Panc1 (cell line): ENCODE measurements at regions of chr11 and their contacts with region 1.

Region 1: DNA sequence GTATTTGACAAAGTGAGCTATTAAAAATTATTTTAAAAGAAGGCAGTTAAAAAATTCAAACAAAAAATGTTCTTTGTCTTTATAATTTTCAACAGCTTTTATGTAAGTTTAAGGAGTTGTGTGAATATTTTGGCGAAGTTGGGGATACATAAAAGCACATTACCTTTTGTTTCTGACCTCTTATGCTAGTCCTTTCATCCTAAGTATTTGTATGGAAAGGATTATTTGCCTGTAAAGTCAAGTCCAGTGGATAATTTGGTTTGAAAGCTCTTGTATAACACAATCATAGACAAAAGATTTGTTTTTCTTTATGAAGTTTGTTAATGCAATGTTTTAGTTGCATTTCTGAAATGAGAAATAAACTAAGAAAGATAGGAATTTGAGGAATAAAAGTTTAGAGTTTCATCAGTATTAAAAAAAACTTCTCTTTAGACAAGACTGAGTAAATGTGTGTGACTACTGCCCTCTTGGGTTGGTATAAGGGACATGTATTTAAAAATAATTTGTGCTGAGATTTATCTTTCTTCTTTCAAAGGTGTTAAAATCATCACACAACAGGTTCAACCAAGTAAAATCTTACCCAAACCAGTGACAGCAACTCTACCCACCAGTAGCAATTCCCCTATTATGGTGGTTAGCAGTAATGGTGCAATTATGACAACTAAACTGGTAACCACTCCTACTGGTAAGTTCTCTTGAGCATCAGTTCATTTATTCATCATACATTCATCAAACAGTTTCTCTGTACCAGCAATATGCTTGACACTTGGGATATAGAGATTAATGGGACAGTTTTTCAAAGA is 68.2 kb downstream of the EMSY start:
- DNase-seq: no peak
- ATAC-seq: no peak
- H3K4me3 ChIP-seq: no peak overlapping the region
- H3K27ac ChIP-seq: no peak overlapping the region
- H3K4me1 ChIP-seq: no peaks in the 10 kb centered on the region
- H3K27me3 ChIP-seq: no peaks in the 10 kb centered on the region
- CTCF ChIP-seq: peak; percentile 60; the same call in 1 of the 2 replicates

Region 2: DNA sequence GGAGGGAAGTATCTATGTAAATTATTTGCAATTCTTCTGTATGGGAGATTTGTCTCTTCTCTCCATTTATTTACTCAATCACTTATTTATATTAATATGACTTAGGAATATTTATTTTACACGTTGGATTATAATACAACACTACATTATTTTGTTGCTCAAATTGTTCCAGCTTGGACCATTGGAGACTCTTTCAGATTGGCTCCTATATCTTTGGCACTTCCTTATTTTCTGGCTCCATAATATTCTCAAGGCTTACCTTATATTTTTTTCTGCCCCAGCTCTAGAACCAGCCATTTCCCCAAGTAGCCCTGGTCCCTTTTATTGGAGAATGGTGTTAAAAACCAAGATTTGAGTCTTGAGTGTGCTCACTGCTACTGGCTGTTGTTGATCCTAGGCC is 55.6 kb after region 1 on chr11:
- CTCF ChIA-PET with region 1: no interaction called
- POLR2A ChIA-PET with region 1: no interaction called
- in situ Hi-C with region 1: no loop called
- intact Hi-C with region 1: loop called (anchors 1 kb)
- DNase-seq: no peak
- ATAC-seq: no peak
- H3K4me3 ChIP-seq: no peak overlapping the region
- H3K27ac ChIP-seq: no peak overlapping the region
- H3K4me1 ChIP-seq: no peaks in the 10 kb centered on the region
- H3K27me3 ChIP-seq: peaks cover 2% of the 10 kb centered on the region; the same call in 1 of the 2 replicates
- CTCF ChIP-seq: no peak

Region 3: GRCh38 chr11:76604626-76605241 is 91.7 kb after region 1 on chr11:
- CTCF ChIA-PET with region 1: interaction called, 12 read pairs
- POLR2A ChIA-PET with region 1: no interaction called
- in situ Hi-C with region 1: no loop called
- intact Hi-C with region 1: no loop called
- DNase-seq: no peak
- ATAC-seq: no peak
- H3K4me3 ChIP-seq: no peak overlapping the region
- H3K27ac ChIP-seq: no peak overlapping the region
- H3K4me1 ChIP-seq: 0 out of 2 replicates have a peak, but pooled peaks cover 2% of the 10 kb centered on the region
- H3K27me3 ChIP-seq: no peaks in the 10 kb centered on the region
- CTCF ChIP-seq: no peak